Transverse colon (tissue), 4 donors: ENCODE measurements at regions of chr14 and their contacts with region 1.

Region 1: GRCh38 chr14:72904840-72905561 is 11.1 kb upstream of the DPF3 start:
- DNase-seq: peak; percentile 71
- H3K4me3 ChIP-seq: no peak overlapping the region
- H3K27ac ChIP-seq: no peak overlapping the region
- H3K4me1 ChIP-seq: peaks cover 0 to 14% (median 7%) of the 10 kb centered on the region in 4 donors
- H3K27me3 ChIP-seq: no peaks in the 10 kb centered on the region
- CTCF ChIP-seq: peak; percentile 90 to 96 (median 91)
- EP300 ChIP-seq: no peak
- POLR2A ChIP-seq: no peak

Region 2: GRCh38 chr14:72523424-72524294 is 381.3 kb before region 1 on chr14:
- in situ Hi-C with region 1: loop called in 1 of 4 experiments (anchors 5 kb)
- intact Hi-C with region 1: no loop called
- DNase-seq: no peak
- H3K4me3 ChIP-seq: no peak overlapping the region
- H3K27ac ChIP-seq: no peak overlapping the region
- H3K4me1 ChIP-seq: no peaks in the 10 kb centered on the region
- H3K27me3 ChIP-seq: no peaks in the 10 kb centered on the region
- CTCF ChIP-seq: no peak
- EP300 ChIP-seq: no peak
- POLR2A ChIP-seq: no peak

Region 3: DNA sequence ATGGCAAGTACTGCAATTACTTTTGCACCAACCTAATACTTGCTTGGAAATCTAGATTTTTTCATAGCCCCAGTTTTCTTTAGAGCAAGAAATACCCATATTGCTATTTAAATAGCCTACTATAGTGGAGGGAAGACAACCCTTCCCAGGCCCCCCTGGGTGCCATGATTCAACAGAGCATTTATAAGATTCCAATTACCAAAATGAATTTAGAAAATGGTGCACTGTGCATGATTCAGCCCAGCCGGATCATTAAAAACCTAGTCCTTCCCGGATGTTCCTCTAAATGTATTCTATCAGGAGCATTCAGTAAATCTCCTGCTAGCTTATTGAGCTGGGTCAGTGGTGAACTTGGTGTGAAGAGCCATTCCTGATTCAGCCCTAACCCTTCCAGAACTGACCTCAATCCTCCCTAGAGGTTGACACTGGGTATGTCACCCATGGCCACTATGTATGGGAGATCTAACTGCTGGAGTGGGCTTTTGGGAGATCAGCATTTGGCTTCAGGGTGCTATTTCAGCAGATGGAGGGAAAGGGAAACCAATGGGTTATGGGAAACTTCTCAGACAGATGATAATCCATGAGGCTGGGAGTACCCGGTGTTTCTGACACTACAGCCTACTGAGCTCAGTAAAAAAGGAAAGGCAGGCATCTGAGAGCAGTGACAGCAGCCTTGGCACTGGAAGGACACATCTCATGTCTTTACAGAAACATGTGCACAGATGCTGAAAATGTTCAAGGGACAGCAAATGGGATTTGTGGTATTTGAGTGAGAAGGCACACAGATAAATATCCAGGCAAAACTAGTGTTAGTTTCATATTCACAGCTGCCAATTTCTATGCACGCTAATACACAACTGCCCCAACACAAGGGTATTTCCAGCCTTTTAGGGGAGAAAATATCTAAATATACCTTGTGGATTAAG is 270.0 kb before region 1 on chr14:
- in situ Hi-C with region 1: no loop called
- intact Hi-C with region 1: no loop called
- DNase-seq: no peak
- H3K4me3 ChIP-seq: no peak overlapping the region
- H3K27ac ChIP-seq: no peak overlapping the region
- H3K4me1 ChIP-seq: no peaks in the 10 kb centered on the region
- H3K27me3 ChIP-seq: no peaks in the 10 kb centered on the region
- CTCF ChIP-seq: no peak
- EP300 ChIP-seq: no peak
- POLR2A ChIP-seq: no peak